MCF 10A (cell line): ENCODE measurements at regions of chr7 and their contacts with region 1.

Region 1: DNA sequence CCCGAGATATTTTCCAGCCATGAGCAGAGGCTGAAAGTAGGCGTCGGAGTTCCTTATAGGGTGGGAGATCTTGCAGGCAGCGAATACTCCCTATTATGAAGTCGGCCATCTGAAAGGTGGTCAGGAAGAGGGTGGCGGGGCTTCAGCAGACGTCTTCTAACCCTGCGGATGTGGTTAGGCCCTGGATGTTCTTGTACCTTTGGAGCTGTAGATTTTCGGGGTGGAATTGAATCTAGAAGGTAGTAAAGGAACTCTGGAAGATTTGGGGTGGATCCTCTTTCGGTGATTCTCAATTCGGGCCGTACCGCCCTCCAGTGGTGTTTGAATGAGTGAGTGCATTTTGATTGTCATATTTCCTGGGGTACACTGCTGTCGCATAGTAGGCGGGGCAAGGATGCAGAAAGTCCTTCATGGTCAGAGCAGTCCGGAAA is 635 bp downstream of the NUP205 start:
- DNase-seq: peak; percentile 85
- H3K4me3 Mint-ChIP-seq: no peak overlapping the region
- H3K27ac Mint-ChIP-seq: no peak overlapping the region
- H3K4me1 Mint-ChIP-seq: peaks cover 9% of the 10 kb centered on the region
- H3K27me3 Mint-ChIP-seq: no peaks in the 10 kb centered on the region
- CTCF ChIP-seq: peak; percentile 41

Region 2: DNA sequence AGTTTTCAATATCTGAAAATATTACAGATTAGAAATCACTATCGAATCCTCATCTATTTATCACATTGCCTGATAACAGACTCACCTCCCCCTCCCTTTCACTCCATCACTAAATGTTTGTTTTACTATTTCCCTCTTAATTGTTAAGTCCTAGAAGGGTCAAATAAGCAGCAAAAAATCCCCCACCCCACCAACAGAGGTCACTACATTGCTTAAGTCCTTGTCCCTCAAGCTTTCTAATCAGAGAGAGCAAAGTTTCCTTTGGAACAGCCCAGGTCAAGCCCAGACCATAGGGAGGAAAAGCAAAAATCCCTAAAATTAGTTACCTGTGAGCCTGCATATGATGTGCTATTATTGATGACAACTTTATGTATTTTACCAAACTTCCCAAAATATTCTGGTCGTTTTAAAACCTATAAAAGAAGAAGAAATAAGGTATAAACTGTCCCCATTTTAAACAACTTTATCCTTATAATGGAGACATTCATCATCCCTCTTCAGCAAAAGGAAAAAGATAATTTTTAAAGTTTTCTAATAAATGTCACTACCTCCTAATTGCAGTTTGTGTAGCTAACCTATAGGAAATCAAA is 143.4 kb before region 1 on chr7:
- CTCF ChIA-PET with region 1: interaction called, 3 read pairs
- POLR2A ChIA-PET with region 1: interaction called, 4 read pairs
- intact Hi-C with region 1: loop called (anchors 1 kb)
- DNase-seq: peak; percentile 63
- H3K4me3 Mint-ChIP-seq: no peak overlapping the region
- H3K27ac Mint-ChIP-seq: no peak overlapping the region
- H3K4me1 Mint-ChIP-seq: peaks cover 11% of the 10 kb centered on the region
- H3K27me3 Mint-ChIP-seq: no peaks in the 10 kb centered on the region
- CTCF ChIP-seq: peak; percentile 50

Region 3: GRCh38 chr7:135573541-135573940 is 15.2 kb after region 1 on chr7:
- CTCF ChIA-PET with region 1: interaction called, 12 read pairs
- POLR2A ChIA-PET with region 1: interaction called, 5 read pairs
- intact Hi-C with region 1: no loop called
- DNase-seq: no peak
- H3K4me3 Mint-ChIP-seq: no peak overlapping the region
- H3K27ac Mint-ChIP-seq: no peak overlapping the region
- H3K4me1 Mint-ChIP-seq: no peaks in the 10 kb centered on the region
- H3K27me3 Mint-ChIP-seq: no peaks in the 10 kb centered on the region
- CTCF ChIP-seq: no peak

Region 4: DNA sequence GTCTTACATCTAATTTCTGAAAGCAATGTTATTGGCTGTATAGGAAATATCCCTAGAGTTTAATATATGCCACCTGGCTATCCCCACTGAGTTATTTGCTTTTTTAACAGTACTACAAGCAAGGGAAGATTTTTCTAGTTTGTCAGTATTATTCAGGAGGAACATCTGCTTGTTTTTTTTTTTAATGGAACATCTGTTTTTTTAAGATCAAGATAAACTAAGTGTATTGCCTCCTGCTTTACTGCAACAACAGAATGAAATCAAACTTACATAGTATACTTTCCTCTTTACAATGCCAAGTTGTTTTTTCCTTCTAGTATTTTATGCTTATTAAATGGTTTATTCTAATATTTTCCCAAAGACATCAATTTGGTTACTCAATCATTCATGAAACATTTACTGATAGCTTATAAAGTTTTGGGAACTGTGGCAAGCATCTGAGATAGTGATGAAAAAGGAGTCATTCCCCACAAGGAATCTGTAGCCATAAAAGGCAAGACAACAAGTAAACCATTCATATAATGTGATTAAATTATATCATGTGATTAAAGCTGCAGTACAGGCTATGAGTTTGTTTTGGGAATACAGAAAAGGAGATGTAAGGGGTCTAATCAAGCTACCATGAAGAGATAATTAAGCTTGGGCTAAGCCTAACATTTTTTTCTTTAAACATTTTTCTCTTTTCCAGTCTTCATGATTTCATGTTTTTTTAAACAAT is 401.5 kb after region 1 on chr7:
- CTCF ChIA-PET with region 1: no interaction called
- POLR2A ChIA-PET with region 1: no interaction called
- intact Hi-C with region 1: no loop called
- DNase-seq: no peak
- H3K4me3 Mint-ChIP-seq: no peak overlapping the region
- H3K27ac Mint-ChIP-seq: no peak overlapping the region
- H3K4me1 Mint-ChIP-seq: peaks cover 25% of the 10 kb centered on the region
- H3K27me3 Mint-ChIP-seq: no peaks in the 10 kb centered on the region
- CTCF ChIP-seq: no peak